ENCODE measurements at regions of chr2 and their contacts with region 1.

Region 1: GRCh38 chr2:61949714-61950560 is 44.5 kb downstream of the COMMD1 start:
- DNase-seq: no peak
- H3K4me3 ChIP-seq: no peak overlapping the region
- H3K27ac ChIP-seq: no peak overlapping the region
- H3K27me3 ChIP-seq: no peaks in the 10 kb centered on the region
- CTCF ChIP-seq: no peak

Region 2: DNA sequence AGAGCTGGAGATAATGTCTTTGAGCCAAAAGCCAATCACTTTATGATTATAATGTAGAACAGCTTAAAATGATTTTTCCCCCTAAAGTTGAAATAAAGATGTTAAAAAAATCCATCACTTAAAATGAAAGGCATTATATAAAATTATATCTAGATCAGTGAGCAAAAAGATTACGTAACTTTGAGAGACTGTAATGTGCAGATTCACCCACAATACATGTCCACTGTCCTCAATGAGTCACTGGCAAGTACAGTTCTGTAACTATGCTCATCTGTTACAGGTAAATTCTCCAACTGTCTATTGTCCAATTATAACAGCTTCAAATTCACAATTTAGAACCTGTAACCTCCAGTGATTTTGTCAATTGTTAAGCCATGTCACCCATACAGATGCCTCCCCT is 115.0 kb before region 1 on chr2:
- CTCF ChIA-PET with region 1: no interaction called
- POLR2A ChIA-PET with region 1: no interaction called
- DNase-seq: no peak
- H3K4me3 ChIP-seq: no peak overlapping the region
- H3K27ac ChIP-seq: no peak overlapping the region
- H3K27me3 ChIP-seq: no peaks in the 10 kb centered on the region
- CTCF ChIP-seq: no peak

Region 3: DNA sequence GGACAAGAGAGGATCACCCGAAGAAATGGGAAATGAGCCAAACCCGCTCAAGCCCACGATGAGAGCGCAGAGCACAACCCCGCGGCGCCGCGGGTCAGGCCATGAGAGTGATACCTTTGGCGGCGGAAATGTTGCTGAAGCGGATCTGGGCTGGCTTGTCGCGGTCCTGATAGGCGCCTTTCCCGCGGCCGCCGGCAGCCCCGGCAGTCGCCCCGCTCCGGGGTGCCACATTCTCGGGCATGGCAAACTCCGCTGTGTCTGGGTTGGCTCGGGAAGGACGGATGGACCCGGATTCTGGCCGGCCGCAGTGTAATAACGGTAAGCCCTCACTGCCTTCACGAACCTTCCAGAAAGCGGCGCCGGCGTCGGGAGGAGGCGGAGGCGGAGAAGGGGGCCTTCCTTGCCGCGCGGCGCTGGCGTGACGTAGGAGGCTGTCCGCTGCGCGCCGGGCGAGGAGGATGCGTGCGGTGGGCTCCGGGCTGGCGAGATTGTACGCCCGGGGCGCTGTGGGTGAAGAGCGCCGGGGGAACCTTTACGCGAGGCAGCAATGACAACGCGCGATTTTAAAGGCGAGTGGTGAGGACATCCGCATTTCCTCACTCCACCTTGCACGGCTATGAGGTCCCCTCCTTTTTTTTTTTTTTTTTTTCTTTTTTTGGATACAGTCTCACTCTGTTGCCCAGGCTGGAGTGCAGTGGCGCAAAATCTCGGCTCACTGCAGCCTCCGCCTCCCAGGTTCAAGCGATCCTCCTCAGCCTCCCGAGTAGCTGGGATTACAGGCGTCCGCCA is 61.5 kb before region 1 on chr2 and contains the start of gene CCT4:
- CTCF ChIA-PET with region 1: no interaction called
- POLR2A ChIA-PET with region 1: interaction called, 16 read pairs
- DNase-seq: peak; percentile 53
- H3K4me3 ChIP-seq: peak within 1 kb of the TSS; percentile 95
- H3K27ac ChIP-seq: peak within 1 kb of the TSS; percentile 98
- H3K27me3 ChIP-seq: no peaks in the 10 kb centered on the region
- CTCF ChIP-seq: no peak
- polyA plus RNA-seq, gene CCT4: 136 and 170 TPM in 2 replicates

Region 4: DNA sequence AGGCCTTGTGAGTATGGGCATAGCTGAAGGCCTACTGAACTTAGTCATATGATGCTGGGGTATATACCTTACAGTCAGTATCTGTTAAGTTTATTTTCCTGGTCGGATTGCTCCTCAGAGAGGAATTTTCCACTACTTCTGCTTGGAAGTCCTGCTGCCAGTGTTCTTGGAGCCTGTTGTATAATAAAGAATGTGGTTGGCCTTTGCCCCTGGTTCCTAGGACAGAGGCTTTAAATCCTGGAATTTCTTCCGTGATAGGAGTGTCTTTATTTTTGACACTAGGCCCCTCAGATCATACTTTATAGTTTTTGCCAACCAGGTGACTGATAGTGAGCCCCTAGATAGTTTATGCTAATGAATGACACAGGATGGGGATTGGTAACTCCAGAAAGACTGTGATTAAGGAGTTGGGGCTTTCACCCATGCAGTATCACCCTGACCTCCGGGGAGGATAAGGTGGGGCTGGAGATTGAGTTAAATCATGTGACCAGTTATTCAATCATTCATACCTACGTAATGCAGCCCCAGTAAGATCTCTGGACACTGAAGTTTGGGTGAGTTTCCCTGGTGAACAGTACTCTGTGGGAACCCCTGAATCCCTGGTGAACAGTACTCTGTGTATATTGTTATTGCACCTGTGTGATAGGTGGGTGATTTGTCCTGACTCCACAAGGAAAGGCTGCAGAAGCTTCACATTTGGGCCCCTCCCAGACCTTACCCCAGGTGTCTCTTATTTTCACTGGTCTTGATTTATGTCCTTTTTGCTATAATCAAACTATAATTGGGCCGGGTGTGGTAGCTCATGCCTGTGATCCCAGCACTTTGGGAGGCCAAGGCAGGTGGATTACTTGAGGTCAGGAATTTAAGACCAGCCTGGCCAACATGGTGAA is 12.4 kb after region 1 on chr2:
- CTCF ChIA-PET with region 1: no interaction called
- POLR2A ChIA-PET with region 1: no interaction called
- DNase-seq: no peak
- H3K4me3 ChIP-seq: no peak overlapping the region
- H3K27ac ChIP-seq: no peak overlapping the region
- H3K27me3 ChIP-seq: no peaks in the 10 kb centered on the region
- CTCF ChIP-seq: no peak

Measured in AG04450 (cell line).